Uterus (tissue), 4 donors: ENCODE measurements at regions of chr10 and their contacts with region 1.

Region 1: DNA sequence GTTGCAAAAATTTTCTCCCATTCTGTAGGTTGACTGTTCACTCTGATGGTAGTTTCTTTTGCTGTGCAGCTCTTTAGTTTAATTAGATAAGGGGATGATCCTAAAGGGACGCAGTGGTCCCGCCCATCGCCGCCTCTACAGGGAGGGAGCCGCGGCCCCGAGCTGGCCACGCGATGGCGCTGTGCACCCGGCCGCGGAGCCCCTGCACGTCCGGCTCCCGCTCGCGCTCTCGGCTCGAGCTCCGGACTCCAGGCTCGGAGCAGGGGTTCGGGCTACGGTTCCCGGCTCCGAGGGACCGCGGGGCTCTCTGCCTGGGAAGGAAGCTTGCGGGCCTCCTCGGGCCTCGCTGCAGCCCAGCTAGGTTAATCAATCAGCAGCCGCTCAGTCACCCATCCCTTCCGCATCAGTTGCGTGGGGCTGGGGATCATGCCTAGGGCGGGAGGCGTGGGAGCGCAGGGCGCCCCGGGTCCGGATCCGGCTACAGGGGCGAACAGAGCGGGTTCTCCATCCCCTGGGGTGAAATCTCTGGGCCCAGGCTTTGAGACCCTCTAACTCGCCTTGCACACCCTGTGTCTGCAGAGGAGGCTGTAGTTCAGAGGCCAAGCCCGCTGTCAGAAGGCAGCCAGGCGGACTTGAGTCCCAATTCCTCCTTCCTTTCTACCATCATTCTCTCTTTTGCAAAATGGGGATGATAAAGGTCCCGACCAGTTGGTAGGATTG is 97.9 kb downstream of the WDR11 start:
- DNase-seq: peak in 1 of 2 donors; percentile 57
- H3K4me3 ChIP-seq: peak overlapping the region in 1 of 2 donors; percentile 20
- H3K27ac ChIP-seq: no peak overlapping the region
- H3K4me1 ChIP-seq: peaks cover 3 to 4% of the 10 kb centered on the region in 2 donors
- H3K27me3 ChIP-seq: no peaks in the 10 kb centered on the region
- CTCF ChIP-seq: peak; percentile 57 to 72 (median 70)
- POLR2A ChIP-seq: no peak

Region 2: DNA sequence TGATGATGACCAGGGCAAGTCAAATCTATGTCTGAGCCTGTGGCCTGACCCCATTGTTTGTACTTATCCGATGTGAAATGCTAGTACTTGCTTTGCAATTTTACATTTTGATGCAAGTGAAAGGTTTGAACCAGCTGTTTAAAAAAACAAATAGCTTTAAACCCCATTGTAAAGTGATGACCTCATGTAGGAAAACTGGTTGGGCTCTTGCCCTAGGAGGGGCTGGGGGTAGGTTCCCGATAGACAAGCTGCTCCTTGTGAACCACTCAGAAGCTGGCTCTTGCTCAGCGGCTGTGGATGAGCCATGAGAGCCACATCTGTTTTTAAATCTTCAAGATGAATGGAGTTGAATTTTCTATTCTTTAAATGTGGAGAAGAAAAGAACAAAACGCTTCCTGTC is 87.4 kb after region 1 on chr10:
- intact Hi-C with region 1: no loop called
- DNase-seq: peak; percentile 37 to 64
- H3K4me3 ChIP-seq: no peak overlapping the region
- H3K27ac ChIP-seq: peak overlapping the region; percentile 24 to 67
- H3K4me1 ChIP-seq: no peaks in the 10 kb centered on the region
- H3K27me3 ChIP-seq: no peaks in the 10 kb centered on the region
- CTCF ChIP-seq: no peak
- POLR2A ChIP-seq: no peak

Region 3: GRCh38 chr10:121448766-121449421 is 499.8 kb after region 1 on chr10:
- intact Hi-C with region 1: no loop called
- DNase-seq: no peak
- H3K4me3 ChIP-seq: no peak overlapping the region
- H3K27ac ChIP-seq: no peak overlapping the region
- H3K4me1 ChIP-seq: no peaks in the 10 kb centered on the region
- H3K27me3 ChIP-seq: no peaks in the 10 kb centered on the region
- CTCF ChIP-seq: no peak
- POLR2A ChIP-seq: no peak

Region 4: DNA sequence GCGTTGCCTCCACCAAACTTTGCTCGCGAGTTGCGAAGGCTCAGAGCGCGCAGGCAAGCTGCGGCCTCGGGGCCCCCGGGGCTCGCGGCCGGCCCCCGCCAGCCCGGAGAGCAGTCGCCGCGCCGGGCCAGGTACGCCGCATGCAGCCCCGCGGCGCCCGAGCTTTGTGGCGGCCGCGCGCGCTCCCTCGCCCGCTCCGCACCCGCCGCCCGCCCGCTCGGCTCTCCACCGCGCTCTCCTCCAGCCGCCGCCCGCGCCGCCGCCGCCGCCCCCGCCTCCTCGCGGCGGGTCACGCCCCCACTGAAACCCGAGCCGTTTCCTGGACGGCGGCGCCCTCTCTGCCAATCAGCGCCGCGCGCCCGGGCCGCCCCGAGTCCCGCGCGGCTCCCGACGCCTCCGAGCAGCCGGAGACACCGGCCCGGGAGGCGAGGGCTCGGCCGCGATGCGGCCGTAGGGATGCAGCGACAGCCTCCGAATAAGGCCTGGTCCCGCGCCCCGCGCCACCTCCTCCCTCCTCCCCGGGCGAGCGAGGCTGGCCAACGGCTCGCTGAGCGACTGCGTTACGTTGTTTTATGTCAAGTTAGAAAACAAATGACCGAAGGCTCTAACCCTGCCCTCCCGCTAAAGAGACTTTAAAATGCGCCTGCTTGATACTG is 649.3 kb after region 1 on chr10 and contains the start of gene FGFR2:
- intact Hi-C with region 1: loop called (anchors 5 kb)
- DNase-seq: peak; percentile 81 to 85
- H3K4me3 ChIP-seq: peak within 1 kb of the TSS; percentile 68 to 83
- H3K27ac ChIP-seq: peak within 1 kb of the TSS; percentile 83 to 94
- H3K4me1 ChIP-seq: peaks cover 0 to 7% of the 10 kb centered on the region in 2 donors
- H3K27me3 ChIP-seq: no peaks in the 10 kb centered on the region
- CTCF ChIP-seq: peak in 2 of 4 experiments; percentile 9 to 20
- POLR2A ChIP-seq: peak; percentile 64 to 89
- total RNA-seq, gene FGFR2: 27.4 to 159 (median 111) TPM